Activated B cell treated with CpG ODN at 0.5 μM for 24 hours (primary cell): ENCODE measurements at regions of chr7 and their contacts with region 1.

Region 1: DNA sequence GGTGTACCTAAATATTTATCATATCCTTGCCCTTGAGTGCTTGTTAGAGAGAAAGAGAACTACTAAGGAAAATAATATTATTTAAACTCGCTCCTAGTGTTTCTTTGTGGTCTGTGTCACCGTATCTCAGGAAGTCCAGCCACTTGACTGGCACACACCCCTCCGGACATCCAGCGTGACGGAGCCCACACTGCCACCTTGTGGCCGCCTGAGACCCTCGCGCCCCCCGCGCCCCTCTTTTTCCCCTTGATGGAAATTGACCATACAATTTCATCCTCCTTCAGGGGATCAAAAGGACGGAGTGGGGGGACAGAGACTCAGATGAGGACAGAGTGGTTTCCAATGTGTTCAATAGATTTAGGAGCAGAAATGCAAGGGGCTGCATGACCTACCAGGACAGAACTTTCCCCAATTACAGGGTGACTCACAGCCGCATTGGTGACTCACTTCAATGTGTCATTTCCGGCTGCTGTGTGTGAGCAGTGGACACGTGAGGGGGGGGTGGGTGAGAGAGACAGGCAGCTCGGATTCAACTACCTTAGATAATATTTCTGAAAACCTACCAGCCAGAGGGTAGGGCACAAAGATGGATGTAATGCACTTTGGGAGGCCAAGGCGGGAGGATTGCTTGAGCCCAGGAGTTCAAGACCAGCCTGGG is 11.4 kb downstream of the SERPINE1 start:
- DNase-seq: peak; percentile 49
- ATAC-seq: peak; percentile 93
- H3K4me3 Mint-ChIP-seq: peak overlapping the region; percentile 70
- H3K27ac Mint-ChIP-seq: peak overlapping the region; percentile 80
- H3K4me1 Mint-ChIP-seq: peaks cover 26% of the 10 kb centered on the region
- H3K27me3 Mint-ChIP-seq: peaks cover 21% of the 10 kb centered on the region
- CTCF ChIP-seq: peak; percentile 66

Region 2: GRCh38 chr7:101017064-101017777 is 121.1 kb before region 1 on chr7:
- CTCF ChIA-PET with region 1: no interaction called
- POLR2A ChIA-PET with region 1: no interaction called
- intact Hi-C with region 1: no loop called
- DNase-seq: peak; percentile 43
- ATAC-seq: peak; percentile 87
- H3K4me3 Mint-ChIP-seq: peak overlapping the region; percentile 74
- H3K27ac Mint-ChIP-seq: no peak overlapping the region
- H3K4me1 Mint-ChIP-seq: peaks cover 21% of the 10 kb centered on the region
- H3K27me3 Mint-ChIP-seq: peaks cover 15% of the 10 kb centered on the region
- CTCF ChIP-seq: no peak

Region 3: DNA sequence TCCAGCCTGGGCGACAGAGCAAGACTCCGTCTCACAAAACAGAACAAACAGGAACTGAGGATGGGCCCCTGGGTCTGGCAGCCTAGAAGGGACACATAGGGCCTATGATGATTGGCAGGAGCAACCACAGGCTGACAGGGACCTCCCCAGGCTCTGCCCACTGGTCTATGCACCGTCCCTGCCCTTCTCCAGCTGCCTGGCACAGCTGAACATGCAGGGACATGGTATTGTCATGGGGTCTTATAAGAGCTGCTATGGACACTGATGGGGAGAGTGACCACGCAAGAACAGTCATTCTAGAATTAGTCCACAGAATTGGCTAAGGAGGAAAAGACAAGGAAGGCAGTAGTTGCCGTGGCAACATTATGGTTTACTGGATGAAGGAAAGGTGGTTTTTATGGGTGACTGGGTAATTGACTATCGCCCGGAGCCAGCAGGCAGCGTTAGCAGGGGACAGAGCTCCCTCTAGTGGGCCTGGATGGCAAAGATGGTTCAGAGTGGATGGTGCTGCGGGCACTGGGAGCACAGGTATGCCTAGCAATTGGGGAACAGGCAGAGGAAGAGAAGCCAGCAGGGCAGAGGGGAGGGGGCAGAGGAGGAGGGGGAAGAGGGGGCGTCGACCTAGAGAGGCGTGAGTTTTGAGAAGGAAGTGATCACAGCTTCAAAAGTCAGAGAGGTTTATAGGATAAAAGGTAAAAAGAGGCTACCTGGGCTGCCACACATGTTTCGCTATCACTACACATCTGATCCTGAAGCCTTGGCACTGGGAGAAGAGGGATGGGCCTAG is 60.8 kb before region 1 on chr7:
- CTCF ChIA-PET with region 1: no interaction called
- POLR2A ChIA-PET with region 1: no interaction called
- intact Hi-C with region 1: loop called (anchors 2 kb)
- DNase-seq: peak; percentile 67
- ATAC-seq: peak; percentile 94
- H3K4me3 Mint-ChIP-seq: peak overlapping the region; percentile 8
- H3K27ac Mint-ChIP-seq: peak overlapping the region; percentile 33
- H3K4me1 Mint-ChIP-seq: peaks cover 9% of the 10 kb centered on the region
- H3K27me3 Mint-ChIP-seq: no peaks in the 10 kb centered on the region
- CTCF ChIP-seq: peak; percentile 32

Region 4: DNA sequence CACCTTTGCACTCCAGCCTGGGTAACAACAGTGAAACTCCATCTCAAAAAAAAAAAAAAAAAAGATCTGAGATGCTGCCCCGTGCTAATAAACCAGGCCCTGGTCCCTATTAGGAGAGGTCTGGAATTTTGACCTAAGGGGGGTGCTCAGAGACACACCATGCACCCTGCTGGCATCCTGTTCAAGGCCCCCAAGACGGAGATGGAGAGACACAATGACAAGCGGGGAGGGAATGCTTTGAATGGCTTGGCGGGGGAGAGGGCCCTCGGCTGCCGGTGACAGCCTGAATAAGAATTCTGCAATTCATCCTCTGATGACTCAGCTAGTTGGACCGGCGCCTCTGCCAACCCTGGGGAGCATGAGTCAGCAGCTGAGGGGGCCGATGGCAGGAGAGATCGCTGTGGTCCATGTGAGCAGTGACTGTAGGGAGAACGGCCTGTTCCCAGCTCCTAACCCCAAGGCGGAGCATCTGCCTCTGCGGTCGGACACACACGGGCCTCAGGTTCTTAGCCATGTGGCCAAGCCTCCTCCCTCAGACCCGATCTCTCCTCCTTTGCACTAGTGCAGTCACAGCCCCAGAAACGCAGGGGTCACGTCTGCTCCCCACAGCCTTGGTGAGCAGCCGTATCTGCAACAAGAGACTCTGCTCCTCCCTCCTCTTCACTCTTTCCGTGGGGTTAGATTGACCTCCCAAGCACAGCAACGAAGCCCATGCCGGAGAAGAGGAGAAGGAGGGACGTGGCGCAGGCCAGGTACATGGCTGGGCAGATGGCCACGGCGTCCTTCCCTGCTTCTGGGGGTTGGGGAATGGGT is 38.2 kb before region 1 on chr7:
- CTCF ChIA-PET with region 1: no interaction called
- POLR2A ChIA-PET with region 1: interaction called, 3 read pairs
- intact Hi-C with region 1: loop called (anchors 1 kb)
- DNase-seq: no peak
- ATAC-seq: peak; percentile 28
- H3K4me3 Mint-ChIP-seq: no peak overlapping the region
- H3K27ac Mint-ChIP-seq: no peak overlapping the region
- H3K4me1 Mint-ChIP-seq: no peaks in the 10 kb centered on the region
- H3K27me3 Mint-ChIP-seq: peaks cover 33% of the 10 kb centered on the region
- CTCF ChIP-seq: no peak

Region 5: DNA sequence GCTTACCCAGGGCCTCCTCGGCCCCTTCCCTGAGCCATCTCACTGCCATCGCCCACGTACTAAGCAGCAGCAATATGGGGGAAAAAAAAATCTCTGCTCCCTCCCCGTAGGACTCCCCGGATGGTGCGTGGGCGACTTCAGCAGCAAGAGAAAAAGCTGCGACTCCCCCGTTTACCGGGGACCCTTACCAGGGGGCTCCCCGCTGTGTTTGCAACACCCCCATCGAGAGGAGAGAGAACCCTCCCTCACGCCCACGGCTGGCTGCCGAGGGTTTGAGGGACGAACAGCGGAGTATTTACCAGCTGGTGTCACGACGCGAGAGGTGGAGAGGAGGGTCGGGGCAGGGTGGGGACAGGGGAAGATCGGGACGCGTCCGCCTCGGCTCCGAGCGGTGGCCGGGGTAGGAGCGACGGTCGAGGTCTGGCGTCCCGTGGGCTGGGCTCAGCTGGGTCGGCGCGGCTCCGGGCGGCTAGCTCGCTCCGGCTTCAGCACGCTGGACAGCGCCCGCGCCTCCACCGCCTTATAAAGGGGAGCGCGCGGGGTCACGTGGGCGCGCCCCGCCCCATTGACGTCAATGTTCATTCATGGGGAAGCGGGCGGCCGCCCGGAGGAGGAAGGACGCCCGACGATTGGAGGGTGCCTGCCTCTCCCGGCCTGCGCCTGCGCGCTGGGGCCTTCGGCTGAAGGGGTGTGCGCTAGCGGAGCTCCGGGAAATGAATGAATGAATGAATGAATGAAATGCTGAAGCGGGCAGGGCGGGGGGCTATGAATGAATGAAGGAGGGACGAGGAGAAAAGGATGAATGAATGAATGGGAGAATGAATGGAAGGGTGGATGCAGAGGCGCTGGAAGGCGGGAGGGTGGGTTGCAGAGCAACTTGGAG is 27.0 kb after region 1 on chr7 and contains the start of gene VGF:
- CTCF ChIA-PET with region 1: interaction called, 11 read pairs
- POLR2A ChIA-PET with region 1: no interaction called
- intact Hi-C with region 1: no loop called
- DNase-seq: peak; percentile 92
- ATAC-seq: peak; percentile 80
- H3K4me3 Mint-ChIP-seq: peak within 1 kb of the TSS; percentile 82
- H3K27ac Mint-ChIP-seq: peak within 1 kb of the TSS; percentile 53
- H3K4me1 Mint-ChIP-seq: peaks cover 46% of the 10 kb centered on the region
- H3K27me3 Mint-ChIP-seq: peaks cover 42% of the 10 kb centered on the region
- CTCF ChIP-seq: no peak
- total RNA-seq, gene VGF: 0.07 and 0.11 TPM in 2 replicates

Region 6: DNA sequence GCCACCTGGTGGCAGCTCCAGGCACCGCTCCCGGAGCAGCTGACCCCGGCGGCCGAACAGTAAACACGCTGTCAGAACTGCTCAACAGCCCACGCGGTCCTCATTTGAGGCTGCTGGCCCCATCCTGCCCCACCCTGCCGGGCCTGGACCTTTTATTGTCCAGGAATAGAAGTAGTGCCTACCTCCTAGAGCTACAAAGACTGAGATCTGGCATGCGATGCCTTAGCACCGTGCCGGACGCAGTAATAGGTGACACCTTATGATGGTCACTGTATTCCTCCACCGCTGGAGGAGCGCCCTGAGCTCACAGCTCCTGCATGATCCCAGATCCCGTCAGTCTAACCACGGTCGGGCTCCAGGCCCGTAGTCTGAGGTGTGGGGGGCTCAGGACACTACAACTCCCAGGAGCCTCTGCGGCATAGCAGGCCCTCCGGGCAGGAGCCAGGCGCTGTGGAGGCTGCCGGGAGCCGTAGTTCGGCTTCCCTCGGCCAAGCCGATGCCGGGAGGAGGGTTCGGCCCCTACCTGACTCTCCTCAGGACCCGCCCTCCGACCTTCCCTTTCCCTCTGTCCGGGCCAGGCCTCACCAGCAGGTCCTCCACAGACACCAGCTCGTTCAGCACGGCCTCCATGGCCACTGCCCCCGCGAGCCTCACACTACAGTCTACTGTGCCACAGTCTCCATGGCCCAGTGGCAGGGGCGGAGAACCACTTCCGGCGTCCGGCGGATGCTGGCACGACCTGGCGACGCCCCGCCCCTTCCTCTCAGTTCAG is 106.2 kb after region 1 on chr7 and contains the start of gene FIS1:
- CTCF ChIA-PET with region 1: interaction called, 55 read pairs
- POLR2A ChIA-PET with region 1: interaction called, 7 read pairs
- intact Hi-C with region 1: no loop called
- DNase-seq: peak; percentile 96
- ATAC-seq: peak; percentile 94
- H3K4me3 Mint-ChIP-seq: peak within 1 kb of the TSS; percentile 95
- H3K27ac Mint-ChIP-seq: peak within 1 kb of the TSS; percentile 95
- H3K4me1 Mint-ChIP-seq: peaks cover 42% of the 10 kb centered on the region
- H3K27me3 Mint-ChIP-seq: no peaks in the 10 kb centered on the region
- CTCF ChIP-seq: no peak
- total RNA-seq, gene FIS1: 113 and 117 TPM in 2 replicates